ENCODE measurements at regions of chr7 and their contacts with region 1.

Region 1: GRCh38 chr7:93530701-93531100 is 43.8 kb downstream of the CALCR start:
- DNase-seq: no peak
- ATAC-seq: no peak

Region 2: DNA sequence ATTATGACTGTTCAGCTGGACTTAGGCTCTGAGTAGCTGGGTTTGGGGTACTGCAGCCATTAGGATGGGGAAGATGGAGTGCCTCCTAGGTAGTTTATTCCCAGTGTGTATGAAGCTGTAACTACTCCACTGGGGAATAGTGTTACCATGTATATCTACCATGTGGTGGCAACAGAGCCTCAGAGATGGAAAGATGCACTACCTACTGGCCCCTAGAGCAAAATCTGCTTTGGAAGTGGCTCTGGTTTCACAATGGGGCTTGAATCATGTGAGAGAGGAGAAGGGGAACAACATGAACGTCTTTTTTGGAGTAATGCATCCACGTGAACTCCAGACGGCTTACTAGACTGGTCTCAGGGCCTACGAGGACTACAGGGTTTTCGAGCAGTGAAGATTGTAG is 123.5 kb before region 1 on chr7:
- intact Hi-C with region 1: no loop called
- DNase-seq: no peak
- ATAC-seq: no peak

Region 3: GRCh38 chr7:93715234-93715633 is 184.5 kb after region 1 on chr7:
- intact Hi-C with region 1: no loop called
- DNase-seq: peak; percentile 62
- ATAC-seq: no peak

Region 4: DNA sequence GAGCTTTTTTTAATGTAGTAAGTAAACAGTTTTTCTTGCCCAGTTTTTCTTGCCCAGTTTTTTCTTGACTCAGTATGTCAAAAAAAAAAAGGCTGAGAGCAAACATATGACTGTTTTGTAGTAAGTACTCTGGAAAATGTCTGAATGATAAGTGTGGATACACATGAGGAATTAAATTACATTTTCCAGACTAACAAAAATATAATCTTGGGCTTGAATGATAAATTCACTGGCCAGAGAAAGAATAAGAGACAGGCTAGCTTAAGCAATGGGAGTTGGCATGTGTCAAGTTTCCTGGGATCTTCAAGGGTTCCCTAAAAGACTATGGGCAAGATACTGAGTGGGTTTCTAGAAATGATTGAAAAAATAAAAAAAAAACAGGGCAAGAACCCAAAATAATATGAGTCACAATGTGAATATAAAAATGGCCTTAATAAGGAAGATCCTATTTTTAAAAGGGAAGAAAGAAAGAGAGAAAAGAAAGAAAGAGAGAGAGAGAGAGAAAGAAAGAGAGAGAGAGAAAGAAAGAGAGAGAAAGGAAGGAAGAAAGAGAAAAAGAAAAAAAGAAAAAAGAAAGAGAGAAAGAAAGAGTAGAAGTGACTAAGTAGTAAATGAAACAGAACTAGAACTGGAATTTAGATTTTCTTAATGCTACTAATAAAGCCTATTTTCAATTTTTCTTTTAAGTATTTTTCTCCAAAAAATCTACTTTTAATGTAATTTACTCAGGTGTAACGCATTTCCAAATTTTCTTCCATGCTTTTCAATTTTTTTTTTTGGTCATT is 299.6 kb after region 1 on chr7:
- intact Hi-C with region 1: loop called (anchors 5 kb)
- DNase-seq: no peak
- ATAC-seq: no peak

Measured in Right ventricle myocardium inferior (tissue), 1 donor.